ENCODE measurements at regions of chr19 and their contacts with region 1.

Region 1: GRCh38 chr19:47112997-47113849 is at the start of gene ZC3H4:
- DNase-seq: peak; percentile 98
- ATAC-seq: peak; percentile 86
- H3K4me3 Mint-ChIP-seq: peak within 1 kb of the TSS; percentile 97
- H3K27ac Mint-ChIP-seq: peak within 1 kb of the TSS; percentile 100
- H3K4me1 Mint-ChIP-seq: peaks cover 21% of the 10 kb centered on the region
- H3K27me3 Mint-ChIP-seq: no peaks in the 10 kb centered on the region
- total RNA-seq, gene ZC3H4: 84.3 to 86.0 TPM

Region 2: DNA sequence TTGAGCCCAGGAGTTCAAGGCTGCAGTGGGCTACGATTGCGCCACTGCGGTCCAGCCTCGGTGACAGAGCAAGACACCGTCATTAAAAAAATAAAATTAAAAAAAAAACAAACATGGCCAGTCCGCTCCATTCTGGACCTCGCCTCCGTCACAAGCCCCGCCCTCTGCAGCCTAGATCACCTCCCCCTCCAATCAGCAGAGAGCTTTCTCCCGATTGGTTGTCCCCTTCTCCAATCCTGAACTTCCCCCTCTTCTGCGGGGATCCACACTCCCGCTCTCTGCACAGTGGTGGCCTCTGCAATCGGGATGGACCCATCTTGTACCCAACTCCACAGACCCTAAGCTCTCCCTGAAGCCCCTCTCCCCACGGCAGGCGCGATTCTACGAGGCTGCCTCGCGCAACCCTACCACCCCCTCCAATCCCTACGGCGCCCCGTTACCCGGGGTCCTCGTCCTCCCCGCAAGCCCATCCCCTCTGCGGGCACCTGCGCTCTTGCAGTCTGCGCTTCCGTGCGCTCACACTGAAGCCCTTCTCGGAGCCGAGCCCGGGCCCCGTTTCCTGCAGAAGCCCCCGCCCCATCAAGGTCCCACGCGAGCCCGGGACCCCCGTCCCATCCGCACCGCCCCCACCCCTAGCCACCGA is 65.3 kb before region 1 on chr19:
- POLR2A ChIA-PET with region 1: interaction called, 25 read pairs
- DNase-seq: peak; percentile 78
- ATAC-seq: peak; percentile 56
- H3K4me3 Mint-ChIP-seq: peak overlapping the region; percentile 97
- H3K27ac Mint-ChIP-seq: peak overlapping the region; percentile 95
- H3K4me1 Mint-ChIP-seq: peaks cover 18% of the 10 kb centered on the region
- H3K27me3 Mint-ChIP-seq: no peaks in the 10 kb centered on the region

Region 3: DNA sequence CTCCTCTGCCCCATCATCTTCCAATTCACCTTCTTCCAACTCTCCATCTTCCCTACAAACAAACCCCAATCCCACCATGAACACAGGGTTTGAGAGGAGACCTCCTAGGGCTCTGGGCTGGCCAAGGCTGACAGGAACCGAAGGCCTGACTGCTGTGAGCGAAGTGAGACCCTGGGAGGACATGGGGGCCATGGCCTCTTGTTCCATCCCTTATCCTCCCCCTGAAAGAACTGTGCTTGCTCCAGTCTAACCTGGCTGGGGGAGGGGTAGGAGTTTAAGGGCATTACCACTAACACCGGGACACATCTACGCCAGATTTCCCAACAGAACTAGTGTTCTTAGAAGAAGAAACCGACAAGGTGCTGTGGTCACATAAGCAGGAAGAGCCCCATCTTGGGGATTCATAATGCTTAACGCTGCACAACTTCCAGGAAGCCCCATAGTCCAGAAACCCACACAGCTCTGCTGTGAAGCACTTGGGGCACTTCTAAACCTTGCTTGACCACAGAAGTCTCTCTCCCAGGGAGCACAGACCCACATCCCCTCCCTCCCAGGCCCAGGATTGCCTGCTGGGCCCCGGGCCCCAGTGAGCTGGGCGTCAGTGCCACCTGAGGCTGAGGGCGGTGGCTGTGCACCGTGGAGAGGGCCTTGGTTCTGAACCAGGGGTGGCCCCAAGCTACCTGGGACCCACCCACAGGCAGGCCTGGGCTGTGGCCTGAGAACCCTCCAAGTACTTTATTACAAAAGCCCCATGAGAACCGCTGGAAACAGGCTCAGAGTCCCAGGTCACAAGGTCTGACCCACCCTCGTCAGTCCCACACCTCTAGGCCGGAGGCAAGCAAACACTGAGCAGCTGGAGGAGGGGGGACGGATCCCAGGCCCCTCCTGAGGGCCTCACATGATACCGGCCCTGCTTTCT is 18.4 kb before region 1 on chr19:
- POLR2A ChIA-PET with region 1: interaction called, 192 read pairs
- DNase-seq: peak; percentile 75
- ATAC-seq: peak; percentile 85
- H3K4me3 Mint-ChIP-seq: peak overlapping the region; percentile 89
- H3K27ac Mint-ChIP-seq: peak overlapping the region; percentile 89
- H3K4me1 Mint-ChIP-seq: peaks cover 66% of the 10 kb centered on the region
- H3K27me3 Mint-ChIP-seq: no peaks in the 10 kb centered on the region

Region 4: DNA sequence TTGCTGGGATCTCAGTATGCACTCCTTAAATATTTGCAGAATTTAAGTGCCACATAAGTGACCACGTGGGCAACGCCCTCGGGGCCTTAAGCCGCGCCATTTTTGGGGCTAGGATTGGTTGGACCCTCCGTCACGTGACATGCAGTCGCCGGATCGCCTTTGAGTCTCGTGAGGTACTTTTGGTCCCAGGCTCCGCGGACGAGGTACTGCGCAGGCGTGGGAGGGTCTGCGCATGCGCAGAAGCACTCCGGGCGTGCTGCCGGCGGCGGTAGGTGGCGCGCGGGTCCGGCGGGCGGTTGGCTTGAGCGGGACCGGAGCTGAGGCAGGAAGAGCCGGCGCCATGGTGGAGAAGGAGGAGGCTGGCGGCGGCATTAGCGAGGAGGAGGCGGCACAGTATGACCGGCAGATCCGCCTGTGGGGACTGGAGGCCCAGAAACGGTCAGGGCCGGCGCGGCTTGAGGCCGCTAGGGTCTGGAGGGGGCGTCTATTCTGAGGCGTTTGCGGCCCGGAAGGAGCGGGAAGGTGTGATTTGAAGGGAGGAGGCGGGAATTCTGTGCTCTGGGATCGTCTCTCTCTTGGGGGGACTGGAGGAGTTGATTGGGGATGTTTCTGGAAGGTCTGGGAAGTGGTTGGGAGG is 17.5 kb after region 1 on chr19 and contains the start of gene SAE1:
- POLR2A ChIA-PET with region 1: interaction called, 33 read pairs
- DNase-seq: peak; percentile 96
- ATAC-seq: peak; percentile 92
- H3K4me3 Mint-ChIP-seq: peak within 1 kb of the TSS; percentile 94
- H3K27ac Mint-ChIP-seq: peak within 1 kb of the TSS; percentile 93
- H3K4me1 Mint-ChIP-seq: peaks cover 38% of the 10 kb centered on the region
- H3K27me3 Mint-ChIP-seq: no peaks in the 10 kb centered on the region
- total RNA-seq, gene SAE1: 108 to 114 TPM

Region 5: DNA sequence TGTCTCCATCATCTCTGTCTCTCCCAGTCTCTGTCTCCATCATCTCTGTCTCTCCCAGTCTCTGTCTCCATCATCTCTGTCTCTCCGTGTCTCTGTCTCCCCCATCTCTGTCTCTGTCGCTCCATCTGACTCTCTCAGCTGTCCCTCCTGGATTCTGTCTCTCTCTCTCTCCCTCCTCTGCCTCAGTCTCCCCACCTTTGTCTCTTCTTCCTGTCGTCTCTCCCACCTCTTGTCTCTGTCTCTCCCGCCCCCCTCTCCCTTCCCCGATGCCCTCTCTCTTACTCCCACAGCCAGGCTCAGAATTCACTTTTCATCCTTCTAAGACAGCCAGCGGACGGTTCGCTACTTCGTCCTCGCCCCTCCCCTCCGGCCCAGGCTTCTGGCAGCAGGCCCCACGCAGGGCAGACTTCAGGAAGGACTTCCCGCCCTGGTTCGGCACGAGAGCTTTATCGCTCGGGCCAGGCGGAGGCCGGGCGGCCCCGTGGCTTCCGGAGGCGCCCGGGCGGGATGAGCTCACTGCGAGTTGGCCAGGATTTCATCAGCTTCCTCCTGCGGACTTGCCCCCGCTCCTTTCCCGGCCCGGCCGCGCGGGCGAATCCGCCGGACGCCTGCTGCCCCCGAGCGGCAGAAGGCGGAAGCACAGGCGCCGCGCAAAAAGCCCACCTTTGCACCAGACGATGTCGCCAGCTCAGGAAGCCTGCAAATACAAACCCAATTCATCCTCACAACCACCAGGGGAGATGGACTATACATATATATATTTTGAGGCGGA is 130.7 kb after region 1 on chr19:
- POLR2A ChIA-PET with region 1: interaction called, 31 read pairs
- DNase-seq: peak; percentile 99
- ATAC-seq: peak; percentile 85
- H3K4me3 Mint-ChIP-seq: peak overlapping the region; percentile 87
- H3K27ac Mint-ChIP-seq: peak overlapping the region; percentile 96
- H3K4me1 Mint-ChIP-seq: peaks cover 28% of the 10 kb centered on the region
- H3K27me3 Mint-ChIP-seq: no peaks in the 10 kb centered on the region

Region 6: DNA sequence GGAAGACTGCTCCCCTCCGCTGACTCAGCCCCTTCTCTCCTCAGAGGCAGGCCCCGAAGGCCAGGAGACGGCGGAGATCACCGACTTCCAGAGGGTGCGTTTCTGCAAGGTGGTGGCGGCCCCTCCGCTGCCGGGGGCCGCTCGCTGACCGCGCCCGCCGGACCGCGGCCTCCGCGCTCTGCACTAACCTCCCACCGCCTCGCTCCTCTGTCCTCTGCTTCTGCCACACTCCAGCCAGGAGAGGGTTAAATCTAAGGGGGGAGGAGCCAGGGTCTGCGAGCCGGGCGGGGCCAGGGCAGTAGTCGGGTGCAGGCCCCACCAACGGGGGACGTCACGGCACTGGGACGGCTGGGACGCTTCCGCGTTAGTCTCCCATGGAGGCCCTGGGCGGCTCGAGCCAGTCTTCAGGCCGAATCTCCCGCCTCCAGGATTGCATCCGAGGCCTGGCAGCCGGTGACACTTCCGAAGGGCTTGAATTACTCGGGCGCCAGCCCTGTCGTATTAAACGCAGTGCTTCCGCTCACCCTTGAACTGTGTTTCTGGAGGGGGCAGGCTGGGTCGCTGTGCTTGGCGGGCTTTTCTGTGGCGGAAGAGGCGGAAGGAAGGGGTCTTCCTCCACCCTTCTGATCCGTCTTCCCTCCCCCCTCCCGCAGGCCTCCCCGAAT is 160.2 kb after region 1 on chr19:
- POLR2A ChIA-PET with region 1: interaction called, 12 read pairs
- DNase-seq: peak; percentile 92
- ATAC-seq: peak; percentile 74
- H3K4me3 Mint-ChIP-seq: peak overlapping the region; percentile 98
- H3K27ac Mint-ChIP-seq: peak overlapping the region; percentile 98
- H3K4me1 Mint-ChIP-seq: peaks cover 13% of the 10 kb centered on the region
- H3K27me3 Mint-ChIP-seq: no peaks in the 10 kb centered on the region

Measured in activated naive CD8-positive, alpha-beta T cell treated with anti-CD3 and anti-CD28 coated beads, Interleukin-2, amount 10 ng/mL, durations not matched to agents 7 days and 5 days (primary cell).